ENCODE measurements at regions of chr14 and their contacts with region 1.

Region 1: GRCh38 chr14:54488646-54489317 is at the start of gene GMFB:
- DNase-seq: peak; percentile 76 to 93 (median 85)
- ATAC-seq: peak; percentile 97 to 99 (median 98)
- H3K4me3 ChIP-seq: peak within 1 kb of the TSS; percentile 78 to 90
- H3K4me3 Mint-ChIP-seq: peak within 1 kb of the TSS; percentile 83 to 95 (median 89)
- H3K27ac ChIP-seq: peak within 1 kb of the TSS; percentile 74
- H3K27ac Mint-ChIP-seq: peak within 1 kb of the TSS; percentile 93 to 94
- H3K4me1 ChIP-seq: peaks cover 6 to 31% of the 10 kb centered on the region in 2 experiments
- H3K4me1 Mint-ChIP-seq: peaks cover 57 to 62% (median 61%) of the 10 kb centered on the region in 3 donors
- H3K27me3 ChIP-seq: no peaks in the 10 kb centered on the region
- H3K27me3 Mint-ChIP-seq: no peaks in the 10 kb centered on the region
- total RNA-seq, gene GMFB: 26.2 to 33.0 (median 27.8) TPM

Region 2: GRCh38 chr14:54241517-54241916 is 247.3 kb before region 1 on chr14:
- CTCF ChIA-PET with region 1: no interaction called
- POLR2A ChIA-PET with region 1: no interaction called
- DNase-seq: no peak
- ATAC-seq: no peak
- H3K4me3 ChIP-seq: no peak overlapping the region
- H3K4me3 Mint-ChIP-seq: no peak overlapping the region
- H3K27ac ChIP-seq: no peak overlapping the region
- H3K27ac Mint-ChIP-seq: no peak overlapping the region
- H3K4me1 ChIP-seq: no peaks in the 10 kb centered on the region
- H3K4me1 Mint-ChIP-seq: no peaks in the 10 kb centered on the region
- H3K27me3 ChIP-seq: no peaks in the 10 kb centered on the region
- H3K27me3 Mint-ChIP-seq: peaks cover 0 to 5% of the 10 kb centered on the region in 2 donors

Region 3: DNA sequence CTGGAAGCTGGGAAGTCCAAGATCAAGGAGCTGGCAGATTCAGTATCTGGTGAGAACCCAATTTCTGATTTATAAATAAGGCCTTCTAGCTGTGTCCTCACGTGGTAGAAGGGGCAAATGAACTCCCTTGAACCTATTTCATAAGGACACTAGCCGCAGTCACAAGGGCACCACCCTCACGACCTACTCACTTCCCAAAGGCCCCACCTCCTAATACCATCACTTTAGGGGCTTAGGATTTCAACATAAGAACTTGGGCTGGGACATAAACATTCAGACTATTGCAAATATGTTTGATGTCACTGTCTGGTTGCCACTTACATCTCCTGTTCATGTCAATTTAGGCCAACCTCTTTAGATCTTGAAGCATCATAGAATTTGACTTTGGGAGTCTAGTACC is 36.8 kb before region 1 on chr14:
- CTCF ChIA-PET with region 1: interaction called in 1 of 2 experiments, 11 read pairs
- POLR2A ChIA-PET with region 1: interaction called in 1 of 2 experiments, 4 read pairs
- DNase-seq: no peak
- ATAC-seq: no peak
- H3K4me3 ChIP-seq: no peak overlapping the region
- H3K4me3 Mint-ChIP-seq: no peak overlapping the region
- H3K27ac ChIP-seq: no peak overlapping the region
- H3K27ac Mint-ChIP-seq: no peak overlapping the region
- H3K4me1 ChIP-seq: no peaks in the 10 kb centered on the region
- H3K4me1 Mint-ChIP-seq: no peaks in the 10 kb centered on the region
- H3K27me3 ChIP-seq: no peaks in the 10 kb centered on the region
- H3K27me3 Mint-ChIP-seq: peaks cover 0 to 6% of the 10 kb centered on the region in 2 donors

Region 4: GRCh38 chr14:54509546-54510501 is 21.0 kb after region 1 on chr14 and contains the start of gene CGRRF1:
- CTCF ChIA-PET with region 1: interaction called in 1 of 2 experiments, 29 read pairs
- POLR2A ChIA-PET with region 1: interaction called, 3 to 27 read pairs
- DNase-seq: peak; percentile 79 to 97 (median 89)
- ATAC-seq: peak; percentile 96 to 99 (median 99)
- H3K4me3 ChIP-seq: peak within 1 kb of the TSS; percentile 95 to 98
- H3K4me3 Mint-ChIP-seq: peak within 1 kb of the TSS; percentile 93 to 97 (median 96)
- H3K27ac ChIP-seq: peak within 1 kb of the TSS; percentile 77
- H3K27ac Mint-ChIP-seq: peak within 1 kb of the TSS; percentile 82 to 89
- H3K4me1 ChIP-seq: peaks cover 9 to 26% of the 10 kb centered on the region in 2 experiments
- H3K4me1 Mint-ChIP-seq: peaks cover 53 to 56% (median 56%) of the 10 kb centered on the region in 3 donors
- H3K27me3 ChIP-seq: no peaks in the 10 kb centered on the region
- H3K27me3 Mint-ChIP-seq: peaks cover 1 to 4% of the 10 kb centered on the region in 2 donors
- total RNA-seq, gene CGRRF1: 14.2 to 28.0 (median 14.9) TPM

Region 5: GRCh38 chr14:54532111-54533012 is 43.6 kb after region 1 on chr14:
- CTCF ChIA-PET with region 1: no interaction called
- POLR2A ChIA-PET with region 1: no interaction called
- DNase-seq: no peak
- ATAC-seq: no peak
- H3K4me3 ChIP-seq: no peak overlapping the region
- H3K4me3 Mint-ChIP-seq: no peak overlapping the region
- H3K27ac ChIP-seq: no peak overlapping the region
- H3K27ac Mint-ChIP-seq: no peak overlapping the region
- H3K4me1 ChIP-seq: no peaks in the 10 kb centered on the region
- H3K4me1 Mint-ChIP-seq: peaks cover 0 to 2% (median 0%) of the 10 kb centered on the region in 3 donors
- H3K27me3 ChIP-seq: no peaks in the 10 kb centered on the region
- H3K27me3 Mint-ChIP-seq: no peaks in the 10 kb centered on the region

Region 6: DNA sequence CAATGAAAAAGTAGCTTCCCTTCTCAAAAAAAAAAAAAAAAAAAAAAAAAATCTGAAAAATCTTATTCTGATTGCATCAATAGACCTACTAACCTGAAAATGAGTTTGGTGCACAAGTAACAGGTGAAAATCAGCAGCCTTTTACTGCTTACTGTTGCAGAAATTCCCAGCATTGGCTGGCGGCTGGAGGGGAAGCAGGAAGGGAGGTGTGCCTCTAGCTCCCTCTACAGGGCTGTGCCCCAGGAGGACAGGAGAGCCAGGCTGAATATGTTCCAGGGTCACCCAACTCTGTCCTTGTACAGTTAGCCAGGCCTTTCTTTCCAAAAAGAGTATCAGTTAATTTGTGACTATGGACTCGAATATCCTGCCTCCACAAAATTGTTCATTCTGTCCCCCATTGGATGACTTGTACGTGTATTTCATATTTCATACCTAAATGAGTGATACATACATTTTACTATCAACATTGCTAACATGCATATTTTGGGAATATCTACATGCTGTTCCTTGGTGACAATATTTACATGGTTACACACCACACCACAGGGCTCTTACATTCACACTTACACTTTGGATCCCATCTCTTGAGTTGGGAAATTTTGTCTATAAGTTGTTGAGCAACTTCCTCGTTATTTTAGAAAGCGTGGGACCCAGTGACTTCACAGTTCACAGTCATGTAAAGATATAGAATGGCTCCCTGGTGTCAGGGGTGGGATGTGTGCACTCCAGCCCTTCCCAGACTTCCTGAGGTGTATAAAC is 202.9 kb after region 1 on chr14:
- CTCF ChIA-PET with region 1: interaction called in 1 of 2 experiments, 12 read pairs
- POLR2A ChIA-PET with region 1: no interaction called
- DNase-seq: peak in 29 of 35 experiments; percentile 5 to 68 (median 27)
- ATAC-seq: peak; percentile 60 to 66 (median 63)
- H3K4me3 ChIP-seq: no peak overlapping the region
- H3K4me3 Mint-ChIP-seq: no peak overlapping the region
- H3K27ac ChIP-seq: no peak overlapping the region
- H3K27ac Mint-ChIP-seq: no peak overlapping the region
- H3K4me1 ChIP-seq: no peaks in the 10 kb centered on the region
- H3K4me1 Mint-ChIP-seq: no peaks in the 10 kb centered on the region
- H3K27me3 ChIP-seq: peaks cover 0 to 16% of the 10 kb centered on the region in 2 experiments
- H3K27me3 Mint-ChIP-seq: peaks cover 16 to 22% of the 10 kb centered on the region in 2 donors

Measured in T-cell (primary cell).